Caco-2 (cell line): ENCODE measurements at regions of chr14 and their contacts with region 1.

Region 1: GRCh38 chr14:20400965-20401593 is 12.2 kb downstream of the TEP1 start:
- DNase-seq: no peak
- H3K4me3 ChIP-seq: no peak overlapping the region
- H3K4me3 Mint-ChIP-seq: no peak overlapping the region
- H3K27ac Mint-ChIP-seq: peak overlapping the region; percentile 30
- H3K4me1 ChIP-seq: 0 out of 2 replicates have a peak, but pooled peaks cover 4% of the 10 kb centered on the region
- H3K4me1 Mint-ChIP-seq: peaks cover 13% of the 10 kb centered on the region
- H3K27me3 ChIP-seq: no peaks in the 10 kb centered on the region
- H3K27me3 Mint-ChIP-seq: no peaks in the 10 kb centered on the region
- CTCF ChIP-seq: no peak

Region 2: DNA sequence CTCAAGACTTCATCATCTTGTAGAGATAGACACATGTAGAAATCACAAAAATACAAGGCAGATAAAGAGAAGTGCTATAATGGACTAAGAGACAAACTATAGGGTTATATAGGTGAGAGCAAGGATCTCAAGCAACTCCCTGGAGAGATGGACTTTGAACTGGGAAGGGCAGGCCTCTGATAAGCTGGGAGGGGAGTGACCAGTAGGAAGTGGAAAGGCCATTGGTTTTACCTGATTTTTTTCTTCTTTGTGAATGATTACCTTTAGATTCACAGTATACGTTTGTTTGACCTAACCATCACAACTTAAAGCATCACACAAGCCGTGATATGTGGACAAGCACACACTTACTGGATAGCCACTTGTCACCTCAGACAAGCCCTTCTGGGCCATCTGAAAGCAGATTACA is 17.4 kb after region 1 on chr14:
- CTCF ChIA-PET with region 1: interaction called, 12 read pairs
- POLR2A ChIA-PET with region 1: no interaction called
- intact Hi-C with region 1: no loop called
- DNase-seq: peak; percentile 79 to 89
- H3K4me3 ChIP-seq: no peak overlapping the region
- H3K4me3 Mint-ChIP-seq: peak overlapping the region; percentile 42
- H3K27ac Mint-ChIP-seq: peak overlapping the region; percentile 85
- H3K4me1 ChIP-seq: peaks cover 47% of the 10 kb centered on the region
- H3K4me1 Mint-ChIP-seq: peaks cover 30% of the 10 kb centered on the region
- H3K27me3 ChIP-seq: no peaks in the 10 kb centered on the region
- H3K27me3 Mint-ChIP-seq: no peaks in the 10 kb centered on the region
- CTCF ChIP-seq: no peak